Naive thymus-derived CD4-positive, alpha-beta T cell (primary cell): ENCODE measurements at regions of chr3 and their contacts with region 1.

Region 1: GRCh38 chr3:152193673-152194267 is 75.0 kb upstream of the MBNL1 start:
- DNase-seq: peak in 6 of 9 donors; percentile 44 to 63 (median 51)
- ATAC-seq: peak; percentile 70
- H3K4me3 ChIP-seq: peak overlapping the region; percentile 58
- H3K4me3 Mint-ChIP-seq: peak overlapping the region; percentile 72 to 92 (median 86)
- H3K27ac ChIP-seq: peak overlapping the region; percentile 70
- H3K27ac Mint-ChIP-seq: peak overlapping the region; percentile 76 to 100 (median 93)
- H3K4me1 ChIP-seq: peaks cover 43 to 46% of the 10 kb centered on the region in 2 donors
- H3K4me1 Mint-ChIP-seq: peaks cover 52 to 91% (median 85%) of the 10 kb centered on the region in 7 donors
- H3K27me3 ChIP-seq: no peaks in the 10 kb centered on the region
- H3K27me3 Mint-ChIP-seq: no peaks in the 10 kb centered on the region

Region 2: GRCh38 chr3:151203051-151203420 is 990.7 kb before region 1 on chr3 and contains the start of gene GPR171:
- CTCF ChIA-PET with region 1: no interaction called
- POLR2A ChIA-PET with region 1: no interaction called
- intact Hi-C with region 1: loop called (anchors 2 to 5 kb)
- DNase-seq: peak in 8 of 9 donors; percentile 62 to 88 (median 82)
- ATAC-seq: peak; percentile 95
- H3K4me3 ChIP-seq: peak within 1 kb of the TSS; percentile 79
- H3K4me3 Mint-ChIP-seq: peak within 1 kb of the TSS; percentile 72 to 94 (median 84)
- H3K27ac ChIP-seq: peak within 1 kb of the TSS; percentile 75
- H3K27ac Mint-ChIP-seq: peak within 1 kb of the TSS; percentile 76 to 98 (median 94)
- H3K4me1 ChIP-seq: peaks cover 45 to 57% of the 10 kb centered on the region in 2 donors
- H3K4me1 Mint-ChIP-seq: peaks cover 34 to 82% (median 71%) of the 10 kb centered on the region in 7 donors
- H3K27me3 ChIP-seq: no peaks in the 10 kb centered on the region
- H3K27me3 Mint-ChIP-seq: no peaks in the 10 kb centered on the region
- total RNA-seq, gene GPR171: 16.0 to 251 (median 63.4) TPM

Region 3: DNA sequence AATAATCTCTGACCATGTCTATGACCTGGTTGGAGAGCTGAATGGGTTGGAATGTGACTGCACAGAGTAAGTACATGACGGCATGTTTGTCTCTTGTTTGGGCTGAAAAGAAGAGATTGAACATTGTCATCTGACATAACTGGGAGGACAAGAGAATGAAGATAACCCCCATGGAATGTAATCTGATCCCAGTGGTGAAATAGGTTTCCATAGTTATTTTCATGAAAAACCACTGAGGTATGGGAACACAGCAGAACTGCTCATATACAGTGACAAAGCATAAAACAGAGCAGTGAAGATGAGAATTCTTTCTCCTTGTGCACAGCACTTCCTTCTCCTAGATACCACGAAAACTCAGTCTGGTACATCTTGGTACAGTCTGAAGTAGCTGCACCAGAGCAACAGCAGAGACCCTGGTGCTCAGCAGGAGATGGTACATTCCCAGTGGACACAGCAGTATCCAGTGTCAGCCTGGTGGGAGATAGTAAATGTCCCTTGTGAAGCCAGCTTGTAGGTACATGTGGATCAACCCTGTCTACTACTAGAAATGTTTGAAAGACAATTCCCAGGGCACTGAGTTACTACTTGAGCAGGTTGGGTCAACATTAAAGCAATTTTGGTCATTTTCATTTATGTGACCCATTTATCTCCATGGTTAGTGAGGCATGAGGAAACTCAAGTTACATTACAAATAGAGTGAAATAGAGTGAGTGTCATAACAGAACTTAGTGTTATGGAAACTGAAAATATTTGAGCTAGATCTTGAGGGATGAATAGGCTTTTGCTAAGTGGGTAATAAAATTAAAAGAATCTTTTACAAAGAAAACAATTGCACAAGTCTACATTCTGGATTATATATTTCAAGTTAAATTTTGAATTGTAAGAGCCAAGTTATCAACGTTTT is 142.0 kb before region 1 on chr3:
- CTCF ChIA-PET with region 1: no interaction called
- POLR2A ChIA-PET with region 1: no interaction called
- intact Hi-C with region 1: no loop called
- DNase-seq: no peak
- ATAC-seq: no peak
- H3K4me3 ChIP-seq: no peak overlapping the region
- H3K4me3 Mint-ChIP-seq: no peak overlapping the region
- H3K27ac ChIP-seq: no peak overlapping the region
- H3K27ac Mint-ChIP-seq: no peak overlapping the region
- H3K4me1 ChIP-seq: no peaks in the 10 kb centered on the region
- H3K4me1 Mint-ChIP-seq: peaks cover 0 to 3% (median 0%) of the 10 kb centered on the region in 7 donors
- H3K27me3 ChIP-seq: no peaks in the 10 kb centered on the region
- H3K27me3 Mint-ChIP-seq: peaks cover 0 to 27% (median 0%) of the 10 kb centered on the region in 5 donors

Region 4: GRCh38 chr3:152071924-152072323 is 121.8 kb before region 1 on chr3:
- CTCF ChIA-PET with region 1: no interaction called
- POLR2A ChIA-PET with region 1: no interaction called
- intact Hi-C with region 1: no loop called
- DNase-seq: peak in 6 of 9 donors; percentile 10 to 43 (median 32)
- ATAC-seq: peak; percentile 75
- H3K4me3 ChIP-seq: no peak overlapping the region
- H3K4me3 Mint-ChIP-seq: no peak overlapping the region
- H3K27ac ChIP-seq: no peak overlapping the region
- H3K27ac Mint-ChIP-seq: no peak overlapping the region
- H3K4me1 ChIP-seq: peaks cover 0 to 5% of the 10 kb centered on the region in 2 donors
- H3K4me1 Mint-ChIP-seq: peaks cover 0 to 6% (median 3%) of the 10 kb centered on the region in 7 donors
- H3K27me3 ChIP-seq: no peaks in the 10 kb centered on the region
- H3K27me3 Mint-ChIP-seq: peaks cover 0 to 6% (median 0%) of the 10 kb centered on the region in 5 donors

Region 5: DNA sequence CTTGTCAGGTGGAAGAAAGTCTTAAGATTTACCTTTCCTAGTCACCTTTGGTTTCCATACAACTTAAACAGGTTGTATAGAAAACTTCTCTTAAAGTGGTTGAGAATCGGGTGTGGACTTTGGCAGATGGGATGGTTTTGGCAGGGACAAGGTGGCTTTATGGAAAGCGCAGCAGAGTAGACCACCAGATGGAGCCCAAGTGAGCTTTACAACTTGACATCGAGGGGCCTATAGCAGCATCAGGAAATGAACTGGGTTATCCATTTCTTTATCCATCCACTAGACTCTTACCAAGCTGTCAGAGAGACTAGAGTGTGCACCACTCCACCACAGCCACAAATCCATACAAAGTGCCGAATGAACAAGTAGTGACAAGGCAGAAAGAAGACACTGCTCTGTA is 10.3 kb before region 1 on chr3:
- CTCF ChIA-PET with region 1: interaction called, 7 read pairs
- POLR2A ChIA-PET with region 1: interaction called, 147 read pairs
- intact Hi-C with region 1: loop called in 1 of 2 experiments (anchors 1 kb)
- DNase-seq: peak in 7 of 9 donors; percentile 41 to 64 (median 55)
- ATAC-seq: peak; percentile 83
- H3K4me3 ChIP-seq: no peak overlapping the region
- H3K4me3 Mint-ChIP-seq: peak overlapping the region; percentile 40 to 74 (median 52)
- H3K27ac ChIP-seq: no peak overlapping the region
- H3K27ac Mint-ChIP-seq: peak overlapping the region in 8 of 9 donors; percentile 48 to 89 (median 70)
- H3K4me1 ChIP-seq: peaks cover 13 to 34% of the 10 kb centered on the region in 2 donors
- H3K4me1 Mint-ChIP-seq: peaks cover 39 to 82% (median 76%) of the 10 kb centered on the region in 7 donors
- H3K27me3 ChIP-seq: no peaks in the 10 kb centered on the region
- H3K27me3 Mint-ChIP-seq: no peaks in the 10 kb centered on the region

Region 6: DNA sequence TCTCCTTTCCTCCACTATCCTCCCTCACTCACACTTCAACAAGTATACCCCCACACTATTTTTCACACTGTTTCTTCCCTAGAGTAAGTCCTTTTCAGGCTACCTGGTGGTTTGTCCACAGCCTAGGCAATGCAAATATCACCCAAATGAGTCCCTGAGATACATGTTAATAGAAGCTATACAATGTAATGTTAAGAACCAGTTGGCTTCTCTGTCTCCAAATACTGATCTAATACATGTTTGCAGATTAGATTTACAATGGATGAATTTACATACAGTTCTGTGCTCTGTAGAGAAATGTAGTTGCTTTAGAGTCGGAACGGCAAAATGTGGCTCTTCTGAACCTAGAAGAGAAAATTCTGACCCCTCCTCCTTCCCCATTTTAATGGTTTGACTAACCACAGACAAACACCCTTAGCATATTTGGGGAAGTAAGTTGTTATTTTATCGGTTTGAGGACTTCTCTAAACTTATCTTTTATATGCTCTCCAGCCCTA is 11.4 kb after region 1 on chr3:
- CTCF ChIA-PET with region 1: interaction called, 3 read pairs
- POLR2A ChIA-PET with region 1: interaction called, 147 read pairs
- intact Hi-C with region 1: loop called (anchors 1 kb)
- DNase-seq: peak in 5 of 9 donors; percentile 23 to 52 (median 41)
- ATAC-seq: peak; percentile 75
- H3K4me3 ChIP-seq: peak overlapping the region; percentile 65
- H3K4me3 Mint-ChIP-seq: peak overlapping the region; percentile 88 to 100 (median 94)
- H3K27ac ChIP-seq: peak overlapping the region; percentile 84
- H3K27ac Mint-ChIP-seq: peak overlapping the region; percentile 91 to 100 (median 96)
- H3K4me1 ChIP-seq: peaks cover 35 to 49% of the 10 kb centered on the region in 2 donors
- H3K4me1 Mint-ChIP-seq: peaks cover 46 to 84% (median 71%) of the 10 kb centered on the region in 7 donors
- H3K27me3 ChIP-seq: no peaks in the 10 kb centered on the region
- H3K27me3 Mint-ChIP-seq: no peaks in the 10 kb centered on the region

Region 7: DNA sequence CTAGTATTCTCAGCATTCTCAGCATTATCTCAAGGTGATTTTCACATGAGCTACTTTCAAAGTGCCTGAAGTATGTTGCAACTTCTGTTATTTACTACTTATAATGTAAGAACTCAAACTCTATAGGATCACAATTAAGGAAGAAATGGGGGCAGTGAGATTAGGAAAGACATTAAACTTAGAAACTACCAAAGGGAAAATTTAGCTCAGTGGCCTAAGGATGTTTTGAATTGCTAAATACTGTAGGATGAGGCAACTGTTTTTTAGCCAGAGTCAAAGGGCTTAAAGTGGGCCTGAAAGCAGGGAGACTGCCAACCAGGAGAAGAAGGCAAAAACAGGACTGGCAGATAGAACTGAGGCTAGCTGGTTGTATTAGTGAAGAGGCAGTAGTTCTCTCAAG is 19.4 kb after region 1 on chr3:
- CTCF ChIA-PET with region 1: interaction called, 4 read pairs
- POLR2A ChIA-PET with region 1: interaction called, 166 read pairs
- intact Hi-C with region 1: no loop called
- DNase-seq: no peak
- ATAC-seq: no peak
- H3K4me3 ChIP-seq: peak overlapping the region; percentile 19
- H3K4me3 Mint-ChIP-seq: peak overlapping the region in 4 of 10 donors; percentile 0 to 45 (median 28)
- H3K27ac ChIP-seq: peak overlapping the region; percentile 25
- H3K27ac Mint-ChIP-seq: peak overlapping the region in 8 of 9 donors; percentile 10 to 100 (median 64)
- H3K4me1 ChIP-seq: peaks cover 10 to 38% of the 10 kb centered on the region in 2 donors
- H3K4me1 Mint-ChIP-seq: peaks cover 43 to 83% (median 70%) of the 10 kb centered on the region in 7 donors
- H3K27me3 ChIP-seq: no peaks in the 10 kb centered on the region
- H3K27me3 Mint-ChIP-seq: no peaks in the 10 kb centered on the region

Region 8: DNA sequence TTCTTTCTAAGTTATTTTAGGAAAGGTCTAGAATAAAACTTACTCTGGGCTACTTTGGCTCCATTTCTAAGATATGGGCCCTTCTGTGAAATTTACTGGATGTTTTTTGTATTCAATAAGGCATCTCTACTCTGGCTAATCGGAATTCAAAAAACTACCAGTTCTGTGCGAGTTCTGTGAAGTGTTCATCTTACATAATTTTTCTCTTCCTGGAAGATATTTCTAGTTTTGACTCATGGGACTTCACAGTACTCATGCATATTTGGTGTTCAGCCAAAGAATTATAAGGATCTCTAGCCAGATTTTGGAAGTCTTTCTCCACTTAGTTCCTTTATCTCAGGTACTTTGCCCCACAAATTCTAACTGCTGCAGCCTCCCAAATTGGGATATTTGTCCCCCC is 28.6 kb after region 1 on chr3:
- CTCF ChIA-PET with region 1: interaction called, 3 read pairs
- POLR2A ChIA-PET with region 1: interaction called, 166 read pairs
- intact Hi-C with region 1: no loop called
- DNase-seq: peak in 1 of 9 donors; percentile 14
- ATAC-seq: peak; percentile 57
- H3K4me3 ChIP-seq: peak overlapping the region; percentile 3
- H3K4me3 Mint-ChIP-seq: peak overlapping the region; percentile 48 to 86 (median 74)
- H3K27ac ChIP-seq: peak overlapping the region; percentile 67
- H3K27ac Mint-ChIP-seq: peak overlapping the region; percentile 65 to 99 (median 92)
- H3K4me1 ChIP-seq: peaks cover 4 to 46% of the 10 kb centered on the region in 2 donors
- H3K4me1 Mint-ChIP-seq: peaks cover 49 to 80% (median 71%) of the 10 kb centered on the region in 7 donors
- H3K27me3 ChIP-seq: no peaks in the 10 kb centered on the region
- H3K27me3 Mint-ChIP-seq: no peaks in the 10 kb centered on the region

Region 9: DNA sequence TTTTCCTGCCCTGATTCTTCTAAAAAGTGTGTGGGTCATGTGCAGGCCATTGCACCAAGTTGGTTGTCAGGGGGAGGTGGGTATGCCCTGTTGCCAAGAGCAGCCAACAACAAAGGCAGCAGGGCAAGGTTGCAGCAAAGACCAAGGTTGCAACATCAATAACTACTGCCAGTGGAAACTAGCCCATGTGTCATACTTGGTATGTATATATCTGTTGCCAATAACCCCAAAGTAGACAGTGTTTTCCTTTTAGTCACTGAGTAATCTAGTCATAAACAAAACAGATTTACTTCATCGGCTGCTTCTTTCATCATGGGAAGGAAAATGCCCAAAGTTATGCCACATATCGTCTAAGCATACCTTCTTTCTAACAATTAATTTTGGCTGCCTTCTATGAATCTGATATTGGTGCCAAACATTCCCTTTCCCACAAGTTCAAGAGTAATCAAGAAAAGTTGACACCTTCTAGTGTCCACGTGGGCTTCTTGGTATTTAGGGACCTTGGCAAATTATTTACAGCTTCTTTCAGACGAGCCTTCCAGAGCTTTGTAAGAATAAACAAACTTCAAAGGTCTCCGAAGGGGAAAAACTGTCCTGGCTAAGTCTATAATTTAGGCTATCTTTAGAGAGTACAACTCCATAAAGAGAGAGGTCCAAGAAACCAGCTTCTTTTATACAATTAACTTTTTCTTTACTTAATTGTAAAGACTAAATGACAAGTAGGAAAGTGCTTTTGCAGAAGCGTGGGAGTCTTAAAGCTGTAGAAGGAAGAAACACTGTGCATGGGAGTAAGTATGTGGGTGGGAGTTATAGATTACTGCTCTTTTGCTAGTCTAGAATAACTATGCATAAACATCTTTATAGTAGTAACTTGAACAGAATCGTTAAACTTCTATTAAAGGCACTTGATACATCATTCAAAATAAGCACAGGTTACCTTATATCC is 65.0 kb after region 1 on chr3:
- CTCF ChIA-PET with region 1: interaction called, 5 read pairs
- POLR2A ChIA-PET with region 1: interaction called, 168 read pairs
- intact Hi-C with region 1: no loop called
- DNase-seq: peak in 6 of 9 donors; percentile 34 to 90 (median 52)
- ATAC-seq: peak; percentile 87
- H3K4me3 ChIP-seq: peak overlapping the region; percentile 3
- H3K4me3 Mint-ChIP-seq: peak overlapping the region; percentile 71 to 87 (median 81)
- H3K27ac ChIP-seq: peak overlapping the region; percentile 83
- H3K27ac Mint-ChIP-seq: peak overlapping the region; percentile 83 to 99 (median 95)
- H3K4me1 ChIP-seq: peaks cover 72 to 78% of the 10 kb centered on the region in 2 donors
- H3K4me1 Mint-ChIP-seq: peaks cover 68 to 98% (median 90%) of the 10 kb centered on the region in 7 donors
- H3K27me3 ChIP-seq: no peaks in the 10 kb centered on the region
- H3K27me3 Mint-ChIP-seq: no peaks in the 10 kb centered on the region

Region 10: GRCh38 chr3:153001210-153002078 is 807.7 kb after region 1 on chr3:
- CTCF ChIA-PET with region 1: no interaction called
- POLR2A ChIA-PET with region 1: no interaction called
- intact Hi-C with region 1: no loop called
- DNase-seq: no peak
- ATAC-seq: no peak
- H3K4me3 ChIP-seq: no peak overlapping the region
- H3K4me3 Mint-ChIP-seq: no peak overlapping the region
- H3K27ac ChIP-seq: no peak overlapping the region
- H3K27ac Mint-ChIP-seq: no peak overlapping the region
- H3K4me1 ChIP-seq: no peaks in the 10 kb centered on the region
- H3K4me1 Mint-ChIP-seq: peaks cover 0 to 4% (median 0%) of the 10 kb centered on the region in 7 donors
- H3K27me3 ChIP-seq: no peaks in the 10 kb centered on the region
- H3K27me3 Mint-ChIP-seq: peaks cover 0 to 15% (median 7%) of the 10 kb centered on the region in 5 donors